CD4-positive, alpha-beta memory T cell (primary cell): ENCODE measurements at regions of chr1 and their contacts with region 1.

Region 1: DNA sequence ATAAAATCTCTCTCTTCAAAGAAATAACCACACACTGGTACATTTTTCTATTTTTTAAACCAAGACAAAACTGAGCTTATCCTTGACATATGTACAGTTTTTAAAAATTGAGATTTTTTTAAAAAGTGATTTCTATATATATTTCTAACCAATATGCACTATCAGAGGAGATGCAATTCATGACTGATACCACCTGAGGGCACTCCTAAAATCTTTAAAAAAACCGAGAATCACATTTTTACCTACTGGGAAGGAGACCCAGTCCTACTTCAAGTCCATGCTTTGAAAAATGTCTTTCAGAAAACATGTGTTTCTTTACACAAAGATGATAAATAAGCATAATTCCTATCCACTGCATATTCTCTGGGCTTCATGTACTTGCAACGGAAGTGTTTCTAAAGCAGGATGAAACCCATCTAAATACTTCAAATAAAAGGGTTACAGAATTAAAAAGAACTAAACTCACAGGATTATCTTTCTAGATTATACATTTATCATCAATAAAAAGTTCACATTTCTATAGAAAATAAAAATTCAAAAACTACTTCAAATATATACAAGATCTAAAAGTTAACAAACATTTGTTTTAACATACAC is 98.6 kb downstream of the ENAH start:
- DNase-seq: peak in 4 of 5 donors; percentile 15 to 28 (median 22)
- H3K4me3 ChIP-seq: no peak overlapping the region
- H3K4me3 Mint-ChIP-seq: no peak overlapping the region
- H3K27ac ChIP-seq: no peak overlapping the region
- H3K27ac Mint-ChIP-seq: no peak overlapping the region
- H3K4me1 ChIP-seq: no peaks in the 10 kb centered on the region
- H3K4me1 Mint-ChIP-seq: no peaks in the 10 kb centered on the region
- H3K27me3 ChIP-seq: no peaks in the 10 kb centered on the region
- H3K27me3 Mint-ChIP-seq: peaks cover 4 to 8% of the 10 kb centered on the region in 2 donors

Region 2: GRCh38 chr1:225242623-225243022 is 311.7 kb before region 1 on chr1:
- CTCF ChIA-PET with region 1: no interaction called
- POLR2A ChIA-PET with region 1: no interaction called
- intact Hi-C with region 1: no loop called
- DNase-seq: no peak
- H3K4me3 ChIP-seq: no peak overlapping the region
- H3K4me3 Mint-ChIP-seq: no peak overlapping the region
- H3K27ac ChIP-seq: no peak overlapping the region
- H3K27ac Mint-ChIP-seq: no peak overlapping the region
- H3K4me1 ChIP-seq: no peaks in the 10 kb centered on the region
- H3K4me1 Mint-ChIP-seq: no peaks in the 10 kb centered on the region
- H3K27me3 ChIP-seq: no peaks in the 10 kb centered on the region
- H3K27me3 Mint-ChIP-seq: peaks cover 25 to 31% of the 10 kb centered on the region in 2 donors

Region 3: GRCh38 chr1:225845571-225846259 is 291.4 kb after region 1 on chr1:
- CTCF ChIA-PET with region 1: no interaction called
- POLR2A ChIA-PET with region 1: no interaction called
- intact Hi-C with region 1: loop called (anchors 10 kb)
- DNase-seq: peak in 3 of 5 donors; percentile 33 to 40 (median 33)
- H3K4me3 ChIP-seq: no peak overlapping the region
- H3K4me3 Mint-ChIP-seq: peak overlapping the region in 1 of 8 donors; percentile 36
- H3K27ac ChIP-seq: no peak overlapping the region
- H3K27ac Mint-ChIP-seq: no peak overlapping the region
- H3K4me1 ChIP-seq: peaks cover 41% of the 10 kb centered on the region
- H3K4me1 Mint-ChIP-seq: peaks cover 25 to 57% (median 38%) of the 10 kb centered on the region in 4 donors
- H3K27me3 ChIP-seq: no peaks in the 10 kb centered on the region
- H3K27me3 Mint-ChIP-seq: no peaks in the 10 kb centered on the region